ENCODE measurements at regions of chr1 and their contacts with region 1.

Region 1: GRCh38 chr1:29793101-29793546 is 556.8 kb downstream of the PTPRU start:
- DNase-seq: peak; percentile 58 to 92 (median 81)
- ATAC-seq: peak; percentile 50 to 96 (median 91)
- H3K4me3 ChIP-seq: no peak overlapping the region
- H3K27ac ChIP-seq: no peak overlapping the region
- H3K4me1 ChIP-seq: no peaks in the 10 kb centered on the region
- H3K27me3 ChIP-seq: no peaks in the 10 kb centered on the region
- CTCF ChIP-seq: peak; percentile 27 to 69 (median 61)

Region 2: DNA sequence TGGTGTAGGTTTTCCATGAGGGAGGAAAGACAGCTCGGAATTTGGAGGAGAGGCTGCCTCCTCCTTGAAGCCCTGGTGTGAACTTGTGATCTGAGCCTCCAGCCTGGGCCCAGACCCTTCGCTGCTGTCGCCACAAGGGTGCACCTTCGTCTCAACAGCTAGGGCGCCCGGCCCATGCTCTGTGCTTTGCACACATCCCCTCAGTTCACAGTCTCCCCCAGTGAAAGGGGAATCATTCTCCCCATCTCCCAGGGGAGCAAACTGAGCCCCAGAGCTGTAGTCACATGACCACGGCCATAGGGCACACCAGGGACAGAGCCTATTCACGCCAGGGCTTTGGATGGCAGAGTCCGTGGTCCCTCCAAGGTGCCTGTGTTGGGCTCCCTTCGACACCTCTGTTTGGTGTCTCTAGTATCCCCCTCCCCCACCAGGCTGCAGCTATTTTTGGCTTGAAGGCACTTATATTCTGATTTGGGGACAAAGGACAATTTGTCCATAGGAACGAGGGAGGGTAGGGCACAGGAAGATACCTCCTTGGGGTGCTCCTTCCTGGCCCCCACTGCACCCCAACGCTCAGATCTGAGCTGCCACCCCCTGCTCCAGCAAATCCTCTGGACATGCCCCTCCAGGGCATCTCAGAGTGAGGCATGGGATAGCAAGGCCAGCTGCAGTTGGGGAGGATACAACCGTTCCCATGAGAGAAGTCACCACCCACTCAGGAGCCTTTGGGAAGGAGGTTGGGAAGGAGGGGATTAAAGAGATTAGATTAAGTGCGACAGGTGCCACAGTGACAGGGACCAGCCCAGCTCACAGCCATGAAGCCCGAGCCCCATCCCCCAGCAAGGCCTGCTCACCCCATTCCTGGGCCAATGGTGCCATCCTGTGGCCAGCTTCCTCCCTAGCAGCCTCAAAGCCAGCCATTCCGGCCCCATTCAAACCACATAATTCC is 914.6 kb after region 1 on chr1:
- intact Hi-C with region 1: loop called in 1 of 3 experiments (anchors 10 kb)
- DNase-seq: peak; percentile 64 to 90 (median 82)
- ATAC-seq: peak; percentile 90 to 99 (median 96)
- H3K4me3 ChIP-seq: no peak overlapping the region
- H3K27ac ChIP-seq: no peak overlapping the region
- H3K4me1 ChIP-seq: no peaks in the 10 kb centered on the region
- H3K27me3 ChIP-seq: no peaks in the 10 kb centered on the region
- CTCF ChIP-seq: peak; percentile 50 to 68 (median 64)

Measured in pancreas (tissue), 10 donors.